H1 (cell line): ENCODE measurements at regions of chr16 and their contacts with region 1.

Region 1: GRCh38 chr16:1929578-1930337 is 11.5 kb upstream of the HS3ST6 start:
- DNase-seq: peak; percentile 57 to 99
- H3K4me3 ChIP-seq: peak overlapping the region; percentile 21 to 55 (median 36); a peak in 7 of 8 replicates
- H3K27ac ChIP-seq: no peak overlapping the region
- H3K4me1 ChIP-seq: peaks cover 0 to 10% (median 4%) of the 10 kb centered on the region in 4 experiments; a peak in 5 of 7 replicates
- H3K27me3 ChIP-seq: peaks cover 0 to 17% (median 9%) of the 10 kb centered on the region in 4 experiments; a peak in 5 of 7 replicates
- CTCF ChIP-seq: peak; percentile 87 to 99 (median 89)
- EP300 ChIP-seq: peak in 1 of 2 experiments; percentile 60; a peak in 1 of 3 replicates
- POLR2A ChIP-seq: no peak
- RAD21 ChIP-seq: peak; percentile 51 to 76

Region 2: GRCh38 chr16:1610276-1611017 is 319.3 kb before region 1 on chr16:
- CTCF ChIA-PET with region 1: no interaction called
- POLR2A ChIA-PET with region 1: no interaction called
- DNase-seq: peak; percentile 68 to 99
- H3K4me3 ChIP-seq: peak overlapping the region; percentile 64 to 85 (median 74)
- H3K27ac ChIP-seq: peak overlapping the region; percentile 30; the same call in 1 of the 2 replicates
- H3K4me1 ChIP-seq: peaks cover 3 to 13% (median 8%) of the 10 kb centered on the region in 4 experiments; a peak in 5 of 7 replicates
- H3K27me3 ChIP-seq: peaks cover 0 to 10% (median 8%) of the 10 kb centered on the region in 4 experiments; a peak in 5 of 7 replicates
- CTCF ChIP-seq: no peak
- EP300 ChIP-seq: no peak
- POLR2A ChIP-seq: 0 out of 3 replicates have a peak, but pooled peaks of 1 of the 2 experiments have one; percentile 2
- RAD21 ChIP-seq: 0 out of 4 replicates have a peak, but pooled peaks of 1 of the 2 experiments have one; percentile 1

Region 3: DNA sequence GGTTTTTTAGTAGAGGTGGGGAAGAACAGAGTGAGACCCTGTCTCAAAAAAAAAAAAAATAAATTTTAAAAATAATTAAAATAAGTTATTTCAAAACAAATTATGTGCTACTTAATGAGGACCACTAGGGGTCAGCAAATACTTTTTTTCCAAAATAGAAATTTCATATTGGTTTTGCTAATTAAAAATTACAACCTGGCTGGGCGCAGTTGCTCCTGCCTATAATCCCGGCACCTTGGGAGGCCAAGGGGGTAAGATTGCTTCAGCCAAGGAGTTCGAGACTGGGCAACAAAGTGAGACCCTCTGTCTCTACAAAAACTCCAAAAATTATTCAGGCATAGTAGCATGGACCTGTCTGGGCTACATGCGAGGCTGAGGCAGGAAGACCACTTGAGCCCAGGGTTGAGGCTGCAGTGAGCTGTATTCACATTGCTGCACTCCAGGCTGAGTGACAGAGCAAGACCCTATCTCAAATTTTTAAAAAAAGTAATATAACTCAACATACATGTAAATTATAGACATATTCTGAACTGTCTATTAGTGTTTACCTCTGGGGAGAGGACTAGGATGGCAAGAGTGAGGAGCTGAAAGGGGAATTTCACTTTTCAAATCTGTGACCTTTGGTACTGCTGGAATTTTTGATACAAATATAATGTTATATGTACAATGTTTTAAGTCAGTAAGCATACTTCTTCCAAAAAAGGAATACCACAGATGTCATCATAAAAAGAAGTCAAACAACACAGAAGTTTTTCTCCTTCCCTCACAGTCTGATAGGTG is 65.9 kb before region 1 on chr16:
- CTCF ChIA-PET with region 1: interaction called, 75 read pairs
- POLR2A ChIA-PET with region 1: interaction called, 5 read pairs
- DNase-seq: no peak
- H3K4me3 ChIP-seq: no peak overlapping the region
- H3K27ac ChIP-seq: no peak overlapping the region
- H3K4me1 ChIP-seq: no peaks in the 10 kb centered on the region
- H3K27me3 ChIP-seq: peaks cover 0 to 3% (median under 1%) of the 10 kb centered on the region in 4 experiments; a peak in 5 of 7 replicates
- CTCF ChIP-seq: peak in 2 of 3 experiments; percentile 8 to 31; a peak in 3 of 4 replicates
- EP300 ChIP-seq: no peak
- POLR2A ChIP-seq: no peak
- RAD21 ChIP-seq: peak; percentile 45 to 58

Region 4: DNA sequence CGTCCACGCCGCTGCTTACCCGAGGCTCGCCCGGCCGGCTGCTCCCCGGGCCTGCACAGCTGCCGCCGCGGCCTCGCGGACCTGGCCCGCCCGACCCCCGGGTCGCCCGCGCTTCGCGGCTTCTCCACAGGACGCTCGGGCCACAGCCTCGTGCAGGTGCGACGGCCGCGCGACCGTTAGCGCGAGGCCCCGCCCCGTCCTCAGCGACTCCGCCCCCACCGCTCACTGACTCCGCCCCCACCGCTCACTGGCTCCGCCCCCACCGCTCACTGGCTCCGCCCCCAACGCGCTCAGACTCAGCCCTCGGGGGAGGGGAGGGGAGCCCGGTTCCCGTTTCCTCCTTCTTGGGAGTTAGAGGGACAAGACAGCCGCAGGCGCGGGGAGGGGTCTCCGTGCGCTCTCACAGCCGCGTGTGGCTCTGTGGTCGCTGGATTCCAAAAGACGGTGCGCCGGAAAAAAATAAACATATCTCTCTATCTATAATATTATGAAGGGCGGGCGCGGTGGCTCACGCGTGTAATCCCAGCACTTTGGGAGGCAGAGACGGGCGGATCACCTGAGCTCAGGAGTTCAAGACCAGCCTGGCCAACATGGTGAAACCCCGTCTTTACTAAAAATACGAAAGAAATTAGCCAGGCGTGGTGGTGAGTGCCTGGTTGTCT is 57.7 kb before region 1 on chr16 and contains the start of gene MEIOB:
- CTCF ChIA-PET with region 1: interaction called, 75 read pairs
- POLR2A ChIA-PET with region 1: interaction called, 3 read pairs
- DNase-seq: peak; percentile 41 to 96
- H3K4me3 ChIP-seq: peak within 1 kb of the TSS; percentile 31 to 62 (median 32); a peak in 7 of 8 replicates
- H3K27ac ChIP-seq: no peak within 1 kb of the TSS
- H3K4me1 ChIP-seq: peaks cover 0 to 4% (median 0%) of the 10 kb centered on the region in 4 experiments; a peak in 1 of 7 replicates
- H3K27me3 ChIP-seq: peaks cover 0 to 15% (median 6%) of the 10 kb centered on the region in 4 experiments; a peak in 6 of 7 replicates
- CTCF ChIP-seq: no peak
- EP300 ChIP-seq: no peak
- POLR2A ChIP-seq: no peak
- RAD21 ChIP-seq: no peak
- total RNA-seq, gene MEIOB: 0.99 and 1.1 TPM in 2 replicates

Region 5: DNA sequence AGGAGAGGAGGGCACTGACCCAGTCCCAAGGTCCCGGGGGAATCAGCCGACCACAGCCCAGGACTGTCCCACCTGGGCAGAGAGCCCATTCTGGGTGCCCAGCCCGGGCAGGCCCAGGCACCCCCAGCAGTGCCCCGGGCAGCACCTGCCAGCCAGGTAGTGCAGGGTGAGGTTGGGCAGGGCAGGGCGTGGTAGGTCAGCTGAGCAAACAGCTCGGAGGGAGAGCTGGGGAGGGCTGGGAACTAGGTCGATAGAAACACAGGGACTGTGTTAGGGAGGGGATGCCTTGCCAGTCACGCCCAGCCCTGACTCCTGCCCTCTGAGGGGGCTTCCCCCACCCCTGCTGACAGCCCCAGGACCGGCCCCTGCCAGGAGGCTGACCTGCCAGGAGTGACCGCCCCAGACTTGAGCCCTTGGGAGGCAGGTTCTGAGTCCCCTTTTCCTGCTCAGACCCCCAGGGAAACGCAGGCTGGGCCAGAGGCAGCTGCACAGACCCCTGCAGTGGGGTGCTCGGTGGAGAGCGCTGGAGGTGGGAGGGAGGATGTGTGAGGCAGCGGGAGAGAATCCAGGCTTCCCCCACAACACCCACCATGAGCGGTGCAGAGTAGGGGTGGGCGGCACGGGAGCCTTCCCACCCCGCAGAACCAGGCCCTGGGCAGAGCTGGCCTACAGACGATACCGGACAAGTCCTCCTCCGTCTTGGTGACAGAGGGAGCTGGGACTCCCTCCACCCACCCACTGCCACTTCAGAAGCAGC is 16.3 kb before region 1 on chr16:
- CTCF ChIA-PET with region 1: interaction called, 19 read pairs
- POLR2A ChIA-PET with region 1: interaction called, 8 read pairs
- DNase-seq: no peak
- H3K4me3 ChIP-seq: no peak overlapping the region
- H3K27ac ChIP-seq: no peak overlapping the region
- H3K4me1 ChIP-seq: peaks cover 0 to 33% (median 18%) of the 10 kb centered on the region in 4 experiments; a peak in 6 of 7 replicates
- H3K27me3 ChIP-seq: peaks cover 16 to 41% (median 35%) of the 10 kb centered on the region in 4 experiments
- CTCF ChIP-seq: no peak
- EP300 ChIP-seq: no peak
- POLR2A ChIP-seq: no peak
- RAD21 ChIP-seq: no peak

Region 6: GRCh38 chr16:1942810-1943726 is 13.3 kb after region 1 on chr16 and contains the start of gene MSRB1:
- CTCF ChIA-PET with region 1: interaction called, 23 read pairs
- POLR2A ChIA-PET with region 1: interaction called, 13 read pairs
- DNase-seq: peak; percentile 96 to 100
- H3K4me3 ChIP-seq: peak within 1 kb of the TSS; percentile 55 to 87 (median 66)
- H3K27ac ChIP-seq: no peak within 1 kb of the TSS
- H3K4me1 ChIP-seq: peaks cover 0 to 11% (median 6%) of the 10 kb centered on the region in 4 experiments; a peak in 5 of 7 replicates
- H3K27me3 ChIP-seq: peaks cover 0 to 2% (median 0%) of the 10 kb centered on the region in 4 experiments; a peak in 1 of 7 replicates
- CTCF ChIP-seq: no peak; a peak in 1 of 4 replicates
- EP300 ChIP-seq: no peak
- POLR2A ChIP-seq: peak in 1 of 2 experiments; percentile 80; a peak in 2 of 3 replicates
- RAD21 ChIP-seq: no peak
- total RNA-seq, gene MSRB1: 28.2 and 34.1 TPM in 2 replicates

Region 7: GRCh38 chr16:1950047-1950446 is 20.3 kb after region 1 on chr16:
- CTCF ChIA-PET with region 1: interaction called, 14 read pairs
- POLR2A ChIA-PET with region 1: interaction called, 4 read pairs
- DNase-seq: no peak
- H3K4me3 ChIP-seq: no peak overlapping the region
- H3K27ac ChIP-seq: no peak overlapping the region
- H3K4me1 ChIP-seq: peaks cover 0 to 3% (median 0%) of the 10 kb centered on the region in 4 experiments; a peak in 3 of 7 replicates
- H3K27me3 ChIP-seq: no peaks in the 10 kb centered on the region
- CTCF ChIP-seq: no peak
- EP300 ChIP-seq: no peak
- POLR2A ChIP-seq: no peak
- RAD21 ChIP-seq: no peak